Aorta (tissue), 5 donors: ENCODE measurements at regions of chr2 and their contacts with region 1.

Region 1: DNA sequence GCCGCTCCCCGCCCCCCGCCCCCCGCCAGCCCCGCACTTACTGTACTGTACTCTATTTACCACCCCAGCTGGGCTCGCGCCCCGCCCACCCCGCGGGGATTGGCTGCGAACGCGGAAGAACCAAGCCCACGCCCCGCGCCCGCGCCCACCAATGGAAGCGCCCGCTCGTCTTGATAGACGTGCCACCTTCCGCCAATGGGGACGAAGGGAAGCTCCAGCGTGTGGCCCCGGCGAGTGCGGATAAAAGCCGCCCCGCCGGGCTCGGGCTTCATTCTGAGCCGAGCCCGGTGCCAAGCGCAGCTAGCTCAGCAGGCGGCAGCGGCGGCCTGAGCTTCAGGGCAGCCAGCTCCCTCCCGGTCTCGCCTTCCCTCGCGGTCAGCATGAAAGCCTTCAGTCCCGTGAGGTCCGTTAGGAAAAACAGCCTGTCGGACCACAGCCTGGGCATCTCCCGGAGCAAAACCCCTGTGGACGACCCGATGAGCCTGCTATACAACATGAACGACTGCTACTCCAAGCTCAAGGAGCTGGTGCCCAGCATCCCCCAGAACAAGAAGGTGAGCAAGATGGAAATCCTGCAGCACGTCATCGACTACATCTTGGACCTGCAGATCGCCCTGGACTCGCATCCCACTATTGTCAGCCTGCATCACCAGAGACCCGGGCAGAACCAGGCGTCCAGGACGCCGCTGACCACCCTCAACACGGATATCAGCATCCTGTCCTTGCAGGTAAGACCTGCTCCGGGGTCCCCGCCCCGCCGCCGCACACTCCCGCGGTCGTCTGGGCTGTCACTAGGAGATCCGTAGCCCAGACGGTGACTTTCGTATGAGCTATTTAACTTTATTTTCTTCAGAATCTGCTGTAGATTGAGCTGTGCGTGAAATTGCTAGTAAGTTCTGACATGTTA is at the start of gene ID2:
- DNase-seq: peak; percentile 100
- ATAC-seq: peak; percentile 87
- H3K4me3 ChIP-seq: peak within 1 kb of the TSS; percentile 93 to 97
- H3K27ac ChIP-seq: peak within 1 kb of the TSS; percentile 83 to 97
- H3K4me1 ChIP-seq: no peaks in the 10 kb centered on the region
- H3K27me3 ChIP-seq: peaks cover 0 to 2% of the 10 kb centered on the region in 2 donors
- total RNA-seq, gene ID2: 212 to 322 TPM

Region 2: GRCh38 chr2:7097348-7097895 is 1584.6 kb before region 1 on chr2:
- intact Hi-C with region 1: loop called in 1 of 2 experiments (anchors 10 kb)
- DNase-seq: peak; percentile 80 to 93
- ATAC-seq: peak; percentile 91
- H3K4me3 ChIP-seq: no peak overlapping the region
- H3K27ac ChIP-seq: no peak overlapping the region
- H3K4me1 ChIP-seq: no peaks in the 10 kb centered on the region
- H3K27me3 ChIP-seq: no peaks in the 10 kb centered on the region

Region 3: DNA sequence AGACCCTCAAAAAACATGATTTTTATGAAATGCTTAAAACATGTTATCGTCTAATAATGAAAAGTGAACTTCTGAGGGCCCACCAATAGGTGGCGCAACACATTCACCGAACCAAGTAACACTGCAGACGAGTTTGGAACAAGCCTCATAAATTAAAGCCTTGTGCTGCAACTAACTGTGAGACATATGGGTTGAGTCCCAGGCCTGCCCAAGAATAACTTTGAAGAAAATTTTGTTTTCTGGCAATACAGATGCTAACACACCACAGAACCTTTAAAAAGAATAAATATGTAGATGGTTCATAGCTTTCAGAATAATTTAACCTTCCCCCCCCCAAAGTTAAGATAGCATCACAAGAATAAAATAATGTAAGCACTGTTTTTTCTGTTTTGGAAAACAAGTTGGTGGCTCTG is 1479.0 kb before region 1 on chr2:
- intact Hi-C with region 1: loop called in 1 of 2 experiments (anchors 10 kb)
- DNase-seq: peak in 1 of 2 donors; percentile 59
- ATAC-seq: peak; percentile 84
- H3K4me3 ChIP-seq: no peak overlapping the region
- H3K27ac ChIP-seq: no peak overlapping the region
- H3K4me1 ChIP-seq: no peaks in the 10 kb centered on the region
- H3K27me3 ChIP-seq: no peaks in the 10 kb centered on the region

Region 4: DNA sequence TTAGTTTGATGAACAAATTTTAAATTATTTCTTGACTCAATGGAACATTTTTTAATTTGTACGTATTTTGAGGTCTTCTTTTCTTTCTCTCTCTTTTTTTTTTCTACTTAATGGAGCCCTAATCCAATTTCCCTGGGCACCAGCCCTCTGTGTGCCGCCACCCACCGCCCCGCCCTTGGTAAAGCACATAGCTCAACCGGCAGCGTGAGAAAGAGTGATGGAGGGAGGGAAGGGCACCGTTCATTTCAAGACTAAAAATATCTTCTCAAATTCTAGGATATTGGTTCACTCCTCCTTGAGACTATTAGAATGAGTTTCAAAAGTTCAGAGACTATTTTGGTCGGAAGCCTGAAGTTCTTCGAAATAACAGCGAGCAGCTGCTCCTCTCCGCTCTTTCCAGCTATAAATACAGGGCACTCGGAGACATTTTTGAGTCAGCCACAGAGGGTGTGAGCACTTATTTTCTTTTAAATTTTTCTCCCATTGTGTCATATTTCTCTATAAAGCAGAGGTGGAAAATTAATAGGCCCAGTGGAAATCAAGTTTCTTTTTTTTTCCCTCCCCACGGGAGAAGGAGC is 731.9 kb before region 1 on chr2:
- intact Hi-C with region 1: loop called (anchors 5 to 10 kb)
- DNase-seq: peak; percentile 62 to 83
- ATAC-seq: peak; percentile 75
- H3K4me3 ChIP-seq: no peak overlapping the region
- H3K27ac ChIP-seq: peak overlapping the region in 1 of 2 donors; percentile 34
- H3K4me1 ChIP-seq: peaks cover 0 to 3% of the 10 kb centered on the region in 2 donors
- H3K27me3 ChIP-seq: no peaks in the 10 kb centered on the region

Region 5: GRCh38 chr2:8247905-8248622 is 434.0 kb before region 1 on chr2:
- intact Hi-C with region 1: loop called (anchors 1 to 10 kb)
- DNase-seq: no peak
- ATAC-seq: peak; percentile 77
- H3K4me3 ChIP-seq: no peak overlapping the region
- H3K27ac ChIP-seq: peak overlapping the region; percentile 91 to 97
- H3K4me1 ChIP-seq: peaks cover 3 to 5% of the 10 kb centered on the region in 2 donors
- H3K27me3 ChIP-seq: no peaks in the 10 kb centered on the region

Region 6: DNA sequence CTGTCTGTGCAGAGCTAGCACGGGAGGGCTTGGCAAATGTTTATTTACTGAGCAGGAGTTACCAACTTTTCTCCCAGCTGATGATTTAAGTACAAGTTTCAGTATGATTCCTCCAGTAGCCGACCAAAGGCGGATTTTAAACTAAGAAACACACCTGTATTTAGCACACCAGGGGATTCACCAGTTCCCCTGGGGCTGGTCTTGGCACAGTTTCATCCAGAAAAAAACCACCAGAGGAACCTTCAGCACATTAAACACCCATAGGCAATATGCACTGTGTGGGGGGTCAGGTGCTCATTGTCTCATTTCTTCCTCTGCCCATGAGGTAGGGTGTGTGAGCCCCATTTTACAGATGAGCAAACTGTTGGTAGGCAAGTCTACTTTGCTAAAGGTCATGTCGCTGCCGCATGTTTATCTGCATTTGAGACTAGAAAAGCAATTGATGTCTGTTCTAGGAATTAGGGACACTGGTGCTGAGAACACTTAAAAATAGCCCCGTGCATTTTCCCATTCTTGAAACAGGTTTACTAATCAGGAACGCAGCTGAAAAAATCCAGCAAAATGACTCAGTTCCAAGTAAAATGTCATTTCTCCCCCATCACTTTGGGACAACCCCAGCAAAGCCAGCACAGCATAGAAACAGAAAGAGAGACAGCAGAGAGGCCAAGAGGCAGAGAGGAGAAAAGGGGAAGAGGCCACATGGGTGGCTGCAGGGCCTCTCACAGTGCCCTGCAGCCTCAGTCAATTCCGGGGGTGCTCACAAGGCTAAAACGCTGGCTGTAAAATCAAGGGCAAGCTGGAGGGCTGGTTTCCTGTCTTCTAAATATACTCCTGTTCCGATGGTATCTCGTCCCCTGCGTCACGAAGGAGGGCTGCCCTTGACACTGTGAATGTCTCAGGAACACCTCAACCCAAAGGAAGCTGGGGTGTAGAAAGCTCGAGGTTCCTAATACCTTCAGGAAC is 167.0 kb before region 1 on chr2:
- intact Hi-C with region 1: no loop called
- DNase-seq: peak in 1 of 2 donors; percentile 58
- ATAC-seq: no peak
- H3K4me3 ChIP-seq: no peak overlapping the region
- H3K27ac ChIP-seq: no peak overlapping the region
- H3K4me1 ChIP-seq: peaks cover 0 to 3% of the 10 kb centered on the region in 2 donors
- H3K27me3 ChIP-seq: no peaks in the 10 kb centered on the region

Region 7: DNA sequence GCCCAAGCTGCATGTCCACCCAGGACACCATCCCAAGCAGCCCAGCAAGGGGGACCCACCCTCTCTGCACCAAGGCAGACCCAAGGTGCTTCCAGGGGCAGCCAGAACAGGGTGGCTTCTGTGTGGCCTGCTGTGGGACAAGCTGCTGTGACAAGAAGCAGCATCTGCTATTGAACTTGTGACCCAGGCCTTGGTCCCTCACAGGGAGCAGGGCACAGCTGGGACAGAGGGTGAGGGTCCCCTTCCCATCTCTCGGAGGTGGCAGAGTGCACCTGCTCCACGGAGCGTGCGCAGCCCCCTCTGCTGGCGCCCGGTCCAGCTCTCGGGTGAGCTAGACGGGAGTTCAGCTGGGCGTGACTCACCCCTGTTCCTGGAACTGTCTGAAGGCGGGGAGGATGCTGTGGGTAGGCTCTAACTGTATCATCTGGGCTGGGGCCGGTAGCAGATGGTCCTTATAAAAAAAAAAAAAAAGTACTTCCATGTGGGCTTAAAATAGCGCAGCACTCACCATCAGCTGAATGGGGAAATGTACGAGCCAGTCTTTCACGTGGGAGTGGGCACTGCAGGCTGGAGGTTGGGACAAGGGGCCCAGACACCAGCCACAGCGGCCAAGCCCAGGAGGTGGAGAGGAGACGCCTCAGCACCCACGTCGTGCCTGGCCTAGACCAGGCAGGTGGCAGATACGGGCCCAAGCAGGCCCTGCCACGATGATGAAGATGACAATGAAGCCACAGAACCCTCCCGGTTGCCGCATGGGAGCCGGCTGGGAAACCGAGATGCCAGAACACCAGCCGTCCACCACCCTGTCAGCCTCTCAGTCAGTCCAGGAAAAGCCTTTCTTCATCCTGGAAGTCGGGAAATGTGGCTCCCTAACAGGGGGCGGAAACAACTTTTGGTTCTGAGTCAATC is 137.0 kb before region 1 on chr2:
- intact Hi-C with region 1: loop called (anchors 5 to 10 kb)
- DNase-seq: peak; percentile 83 to 88
- ATAC-seq: peak; percentile 25
- H3K4me3 ChIP-seq: no peak overlapping the region
- H3K27ac ChIP-seq: no peak overlapping the region
- H3K4me1 ChIP-seq: no peaks in the 10 kb centered on the region
- H3K27me3 ChIP-seq: no peaks in the 10 kb centered on the region